MCF 10A (cell line): ENCODE measurements at regions of chr4 and their contacts with region 1.

Region 1: GRCh38 chr4:99949034-99949998 is 759 bp downstream of the H2AZ1 start:
- DNase-seq: peak; percentile 99
- H3K4me3 Mint-ChIP-seq: no peak overlapping the region
- H3K27ac Mint-ChIP-seq: no peak overlapping the region
- H3K4me1 Mint-ChIP-seq: peaks cover 11% of the 10 kb centered on the region
- H3K27me3 Mint-ChIP-seq: no peaks in the 10 kb centered on the region
- CTCF ChIP-seq: peak; percentile 76

Region 2: GRCh38 chr4:99078931-99079624 is 870.2 kb before region 1 on chr4:
- CTCF ChIA-PET with region 1: no interaction called
- POLR2A ChIA-PET with region 1: no interaction called
- intact Hi-C with region 1: no loop called
- DNase-seq: no peak
- H3K4me3 Mint-ChIP-seq: no peak overlapping the region
- H3K27ac Mint-ChIP-seq: peak overlapping the region; percentile 73
- H3K4me1 Mint-ChIP-seq: no peaks in the 10 kb centered on the region
- H3K27me3 Mint-ChIP-seq: no peaks in the 10 kb centered on the region
- CTCF ChIP-seq: no peak

Region 3: DNA sequence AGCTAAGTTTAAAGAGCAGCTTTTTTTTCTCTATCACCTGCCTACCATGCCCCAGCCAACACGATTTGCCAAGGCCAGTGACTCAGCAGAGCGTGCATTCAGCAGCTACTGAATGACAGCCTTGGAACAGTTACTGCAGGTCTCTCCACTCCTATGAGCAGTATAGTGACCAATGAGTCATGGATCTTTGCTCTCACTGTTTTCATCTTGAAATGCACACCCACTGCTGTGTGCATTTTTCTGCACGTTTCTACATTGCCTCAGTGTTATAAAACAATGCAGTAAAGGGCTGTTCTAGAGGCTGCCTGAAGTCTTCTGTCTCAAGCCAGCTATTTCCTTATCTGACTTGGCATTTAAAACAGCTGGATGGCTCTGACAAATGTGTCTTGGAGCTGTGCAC is 225.7 kb before region 1 on chr4:
- CTCF ChIA-PET with region 1: no interaction called
- POLR2A ChIA-PET with region 1: interaction called, 4 read pairs
- intact Hi-C with region 1: loop called (anchors 2 kb)
- DNase-seq: peak; percentile 93
- H3K4me3 Mint-ChIP-seq: no peak overlapping the region
- H3K27ac Mint-ChIP-seq: no peak overlapping the region
- H3K4me1 Mint-ChIP-seq: peaks cover 13% of the 10 kb centered on the region
- H3K27me3 Mint-ChIP-seq: no peaks in the 10 kb centered on the region
- CTCF ChIP-seq: no peak

Region 4: GRCh38 chr4:99868126-99868596 is 81.2 kb before region 1 on chr4:
- CTCF ChIA-PET with region 1: no interaction called
- POLR2A ChIA-PET with region 1: no interaction called
- intact Hi-C with region 1: no loop called
- DNase-seq: no peak
- H3K4me3 Mint-ChIP-seq: no peak overlapping the region
- H3K27ac Mint-ChIP-seq: no peak overlapping the region
- H3K4me1 Mint-ChIP-seq: no peaks in the 10 kb centered on the region
- H3K27me3 Mint-ChIP-seq: no peaks in the 10 kb centered on the region
- CTCF ChIP-seq: no peak

Region 5: DNA sequence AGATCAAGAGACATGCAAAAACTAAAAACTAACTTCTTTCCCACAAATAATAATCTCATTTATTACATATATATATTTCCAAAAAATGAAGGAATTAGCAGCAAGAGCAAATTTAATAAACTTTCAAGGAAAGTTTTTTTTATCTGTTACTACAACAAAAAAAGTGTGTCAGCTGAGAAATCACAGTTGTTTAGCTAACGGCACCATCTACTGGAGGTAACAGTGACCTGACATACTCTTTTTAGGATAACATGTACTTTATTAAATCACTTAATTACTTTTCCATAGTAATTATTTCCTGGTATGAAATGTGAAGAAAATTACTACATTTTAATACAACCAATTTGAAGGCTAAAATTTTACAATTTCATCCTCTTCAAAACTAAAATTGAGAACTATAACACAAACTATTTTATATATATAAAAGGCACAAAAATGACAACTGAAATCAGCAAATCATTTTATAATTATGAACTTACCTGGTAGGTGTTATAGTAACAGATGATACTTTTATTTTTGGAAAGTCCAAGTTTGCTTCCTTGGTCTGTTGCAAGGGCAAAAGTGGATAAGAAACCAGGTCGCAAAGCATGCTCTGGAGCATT is 64.2 kb before region 1 on chr4:
- CTCF ChIA-PET with region 1: interaction called, 4 read pairs
- POLR2A ChIA-PET with region 1: interaction called, 10 read pairs
- intact Hi-C with region 1: loop called (anchors 2 kb)
- DNase-seq: peak; percentile 64
- H3K4me3 Mint-ChIP-seq: no peak overlapping the region
- H3K27ac Mint-ChIP-seq: no peak overlapping the region
- H3K4me1 Mint-ChIP-seq: peaks cover 5% of the 10 kb centered on the region
- H3K27me3 Mint-ChIP-seq: no peaks in the 10 kb centered on the region
- CTCF ChIP-seq: peak; percentile 39

Region 6: GRCh38 chr4:99960648-99961047 is 11.3 kb after region 1 on chr4:
- CTCF ChIA-PET with region 1: interaction called, 3 read pairs
- POLR2A ChIA-PET with region 1: interaction called, 16 read pairs
- intact Hi-C with region 1: no loop called
- DNase-seq: no peak
- H3K4me3 Mint-ChIP-seq: no peak overlapping the region
- H3K27ac Mint-ChIP-seq: no peak overlapping the region
- H3K4me1 Mint-ChIP-seq: no peaks in the 10 kb centered on the region
- H3K27me3 Mint-ChIP-seq: no peaks in the 10 kb centered on the region
- CTCF ChIP-seq: no peak

Region 7: DNA sequence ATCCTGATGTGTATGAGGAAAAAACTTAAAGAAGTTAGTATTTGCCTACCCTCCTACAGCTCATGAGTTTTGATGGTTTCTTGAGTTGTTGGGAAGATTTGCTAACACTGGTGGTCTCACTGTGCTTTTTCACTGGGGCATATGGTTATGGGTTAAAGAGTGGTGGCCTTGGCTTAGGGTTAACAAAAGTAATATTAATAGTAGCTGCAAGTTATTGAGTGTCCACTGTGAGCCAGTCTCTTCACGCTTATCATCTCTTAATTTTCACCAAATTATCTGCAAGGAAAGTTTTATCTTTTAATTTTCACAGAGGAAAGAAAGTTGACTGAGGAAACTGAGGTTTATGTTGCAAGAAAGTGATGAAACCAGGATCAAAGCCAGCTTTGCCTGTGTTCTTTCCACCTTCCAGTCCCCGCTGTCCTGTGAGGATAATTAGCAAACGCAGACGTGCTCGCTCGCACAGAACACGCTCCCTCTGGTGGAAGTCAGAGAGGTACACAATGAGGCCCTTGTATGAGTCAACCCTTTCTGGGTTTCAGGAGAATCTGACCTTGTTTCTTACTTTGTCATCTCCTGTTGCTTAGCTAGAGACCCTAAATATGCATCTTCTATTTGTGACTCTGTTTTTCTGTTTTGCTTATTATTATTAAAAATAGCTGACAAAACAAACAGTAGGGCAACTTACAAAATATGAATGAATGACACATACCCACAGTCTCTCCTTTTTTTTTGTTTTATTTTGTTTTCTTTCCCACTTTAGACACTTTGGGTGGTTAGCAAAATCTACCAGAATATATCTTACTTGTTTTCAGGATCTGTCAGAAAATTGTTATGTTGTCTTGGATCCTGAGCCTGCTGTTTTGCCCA is 146.6 kb after region 1 on chr4:
- CTCF ChIA-PET with region 1: no interaction called
- POLR2A ChIA-PET with region 1: no interaction called
- intact Hi-C with region 1: no loop called
- DNase-seq: peak; percentile 81
- H3K4me3 Mint-ChIP-seq: no peak overlapping the region
- H3K27ac Mint-ChIP-seq: peak overlapping the region; percentile 64
- H3K4me1 Mint-ChIP-seq: peaks cover 19% of the 10 kb centered on the region
- H3K27me3 Mint-ChIP-seq: no peaks in the 10 kb centered on the region
- CTCF ChIP-seq: peak; percentile 54